ENCODE measurements at regions of chr6 and their contacts with region 1.

Region 1: DNA sequence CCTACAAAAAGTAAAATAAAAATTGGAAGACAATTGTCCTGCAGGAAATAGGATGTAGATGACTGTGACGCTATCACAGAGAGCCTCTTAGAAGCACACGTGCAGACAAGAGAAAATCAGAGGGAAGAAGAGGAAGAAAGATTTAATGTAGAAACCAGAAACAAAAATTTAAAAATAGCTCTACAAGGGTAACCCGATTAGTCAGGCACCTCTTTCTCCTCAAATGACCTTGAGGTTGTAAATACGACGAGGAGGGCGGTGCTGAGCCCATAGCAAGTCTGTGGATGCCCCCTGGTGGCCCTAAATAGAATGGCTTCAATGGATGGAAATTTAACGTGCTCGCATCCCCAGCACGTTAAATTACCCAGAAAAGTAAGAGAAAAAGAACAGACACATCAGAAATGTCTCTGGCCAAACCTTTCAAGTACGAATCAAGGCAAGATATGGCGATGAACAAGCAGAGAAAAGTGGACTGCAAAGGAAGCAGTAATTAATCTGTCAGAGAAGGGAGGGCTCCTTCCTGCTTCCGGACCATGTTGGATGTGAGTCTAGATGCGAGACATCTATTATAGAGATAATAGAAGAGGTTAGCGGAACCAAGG is 4.2 kb upstream of the PRPH2 start:
- DNase-seq: peak; percentile 53 to 96
- ATAC-seq: peak; percentile 97 to 98 (median 98)
- H3K4me3 ChIP-seq: peak overlapping the region; percentile 49
- H3K4me3 Mint-ChIP-seq: peak overlapping the region; percentile 93
- H3K27ac ChIP-seq: peak overlapping the region; percentile 72
- H3K27ac Mint-ChIP-seq: peak overlapping the region; percentile 90
- H3K4me1 ChIP-seq: peaks cover 8% of the 10 kb centered on the region
- H3K4me1 Mint-ChIP-seq: peaks cover 19 to 20% of the 10 kb centered on the region in 2 donors
- H3K27me3 ChIP-seq: no peaks in the 10 kb centered on the region
- H3K27me3 Mint-ChIP-seq: no peaks in the 10 kb centered on the region
- CTCF ChIP-seq: peak; percentile 86

Region 2: DNA sequence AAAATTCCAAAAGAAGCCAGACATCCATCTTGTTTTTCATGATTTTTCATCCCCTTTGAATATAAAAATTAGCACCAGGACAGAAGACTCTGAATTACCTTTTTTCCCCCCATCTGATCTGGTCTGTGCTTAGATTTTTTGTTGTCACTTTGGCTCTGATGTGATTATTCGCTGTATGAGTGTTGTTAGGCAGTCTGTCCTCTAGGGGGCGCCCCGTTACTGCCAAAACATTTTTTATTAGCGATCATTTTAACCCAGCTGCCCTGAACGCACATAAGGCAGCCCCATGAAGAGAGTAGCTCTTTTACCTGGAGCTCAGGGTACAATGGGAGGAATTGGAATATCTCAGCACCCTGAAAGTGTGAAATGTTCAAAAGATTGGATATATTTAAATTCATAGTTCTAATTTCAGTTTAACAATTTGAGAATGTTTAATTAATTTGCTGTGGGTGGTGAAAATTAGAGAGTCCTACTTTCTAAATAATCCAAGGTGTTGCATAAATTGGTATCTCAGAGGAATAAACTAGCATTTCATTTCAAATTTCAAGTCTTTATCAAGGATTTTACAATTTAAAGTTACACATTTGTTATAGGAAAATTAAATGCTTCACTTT is 64.9 kb before region 1 on chr6:
- intact Hi-C with region 1: loop called (anchors 1 kb)
- DNase-seq: peak; percentile 80 to 89
- ATAC-seq: peak; percentile 92 to 100 (median 96)
- H3K4me3 ChIP-seq: no peak overlapping the region
- H3K4me3 Mint-ChIP-seq: no peak overlapping the region
- H3K27ac ChIP-seq: no peak overlapping the region
- H3K27ac Mint-ChIP-seq: peak overlapping the region in 1 of 2 donors; percentile 17
- H3K4me1 ChIP-seq: no peaks in the 10 kb centered on the region
- H3K4me1 Mint-ChIP-seq: no peaks in the 10 kb centered on the region
- H3K27me3 ChIP-seq: no peaks in the 10 kb centered on the region
- H3K27me3 Mint-ChIP-seq: no peaks in the 10 kb centered on the region
- CTCF ChIP-seq: peak; percentile 91

Region 3: DNA sequence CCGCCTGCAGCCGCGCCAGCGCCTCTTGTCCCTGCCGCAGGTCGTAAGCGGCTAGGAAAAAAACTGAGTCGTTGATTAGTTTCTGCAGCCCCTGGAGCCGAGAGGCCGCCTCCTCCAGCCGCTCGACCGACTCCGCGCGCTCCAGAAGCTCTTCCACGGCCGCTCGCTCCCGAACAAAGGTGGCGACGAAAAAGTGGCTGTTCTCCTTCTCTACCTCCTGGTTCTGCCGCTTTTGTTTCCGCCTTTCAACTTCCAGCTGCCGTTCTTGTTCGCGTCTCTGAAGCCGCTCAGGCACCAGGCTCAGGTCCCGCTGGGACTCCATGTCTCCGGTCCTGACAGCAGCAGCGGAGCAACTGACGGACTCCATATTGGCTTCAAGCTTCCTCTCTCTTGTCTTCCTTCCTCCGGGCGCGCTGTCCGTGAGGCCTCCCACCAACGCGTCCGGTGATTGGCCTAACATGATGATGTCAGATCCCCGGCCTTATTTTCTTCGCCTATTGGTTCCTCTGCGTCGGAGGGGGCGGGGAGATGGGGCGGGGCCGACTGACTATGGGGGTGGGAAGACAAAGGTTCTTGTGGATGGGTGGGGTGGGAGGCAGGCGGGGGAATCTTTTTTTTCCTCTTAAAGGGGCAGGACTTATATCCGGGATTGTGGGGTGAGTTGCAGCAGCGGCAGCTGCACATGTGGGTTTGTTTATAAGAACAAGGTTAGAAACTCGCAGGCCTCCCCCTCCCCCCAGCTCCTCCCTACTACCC is 19.3 kb after region 1 on chr6 and contains the start of gene TBCC:
- intact Hi-C with region 1: loop called (anchors 1 kb)
- DNase-seq: peak; percentile 86 to 98
- ATAC-seq: peak; percentile 83 to 92 (median 85)
- H3K4me3 ChIP-seq: peak within 1 kb of the TSS; percentile 98
- H3K4me3 Mint-ChIP-seq: peak within 1 kb of the TSS; percentile 100
- H3K27ac ChIP-seq: peak within 1 kb of the TSS; percentile 95
- H3K27ac Mint-ChIP-seq: peak within 1 kb of the TSS; percentile 98 to 100
- H3K4me1 ChIP-seq: peaks cover 38% of the 10 kb centered on the region
- H3K4me1 Mint-ChIP-seq: peaks cover 22 to 23% of the 10 kb centered on the region in 2 donors
- H3K27me3 ChIP-seq: no peaks in the 10 kb centered on the region
- H3K27me3 Mint-ChIP-seq: no peaks in the 10 kb centered on the region
- CTCF ChIP-seq: no peak
- total RNA-seq, gene TBCC: 64.1 to 77.6 (median 65.6) TPM

Region 4: GRCh38 chr6:42782622-42783176 is 56.1 kb after region 1 on chr6:
- intact Hi-C with region 1: loop called (anchors 5 kb)
- DNase-seq: peak; percentile 64 to 89
- ATAC-seq: peak; percentile 51 to 69 (median 60)
- H3K4me3 ChIP-seq: peak overlapping the region; percentile 89
- H3K4me3 Mint-ChIP-seq: peak overlapping the region; percentile 95
- H3K27ac ChIP-seq: peak overlapping the region; percentile 100
- H3K27ac Mint-ChIP-seq: no peak overlapping the region
- H3K4me1 ChIP-seq: peaks cover 22% of the 10 kb centered on the region
- H3K4me1 Mint-ChIP-seq: peaks cover 6 to 14% of the 10 kb centered on the region in 2 donors
- H3K27me3 ChIP-seq: no peaks in the 10 kb centered on the region
- H3K27me3 Mint-ChIP-seq: no peaks in the 10 kb centered on the region
- CTCF ChIP-seq: no peak

Region 5: DNA sequence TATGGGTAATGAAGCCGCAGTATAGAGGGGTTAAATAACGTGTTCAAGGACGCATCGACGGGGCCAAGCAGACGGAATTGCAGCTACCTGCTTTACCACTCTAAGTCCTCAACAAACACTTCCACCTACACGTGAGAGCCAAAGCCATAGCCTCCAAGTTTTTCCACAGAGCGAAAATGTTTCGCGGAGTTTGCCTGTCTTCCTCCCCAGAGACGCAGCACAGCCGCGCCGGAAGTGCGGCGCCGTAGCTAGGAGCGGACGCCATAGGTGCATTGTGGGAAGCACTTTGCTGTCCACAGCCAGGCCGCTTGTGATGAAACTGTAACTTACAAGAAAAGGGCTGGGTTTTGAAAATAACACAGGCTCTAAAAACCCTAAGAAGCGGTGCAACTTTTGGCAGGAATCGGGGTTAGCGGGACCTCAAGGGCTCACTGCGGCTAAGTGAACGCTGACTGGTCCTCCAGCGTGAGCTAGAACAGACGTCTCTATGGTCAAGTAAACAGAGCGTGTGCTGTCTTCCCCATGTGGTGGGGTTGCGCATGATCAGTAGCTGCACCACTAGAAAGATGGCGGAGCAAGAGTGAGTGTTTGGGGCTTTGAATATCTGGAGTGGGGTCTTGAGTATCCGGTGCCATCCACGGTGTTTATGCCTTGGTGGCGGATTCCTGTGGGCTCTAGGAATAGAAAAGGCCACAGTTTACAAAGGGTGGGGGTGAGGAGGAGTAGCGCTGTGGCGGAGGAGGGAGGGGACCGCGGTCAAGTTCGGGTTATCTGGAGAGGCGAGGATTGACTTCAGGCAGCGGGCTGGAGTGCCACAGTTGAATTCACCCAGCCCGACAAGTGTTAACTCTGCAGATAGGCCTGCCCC is 153.0 kb after region 1 on chr6 and contains the start of gene RPL7L1:
- intact Hi-C with region 1: loop called (anchors 1 kb)
- DNase-seq: peak; percentile 78 to 92
- ATAC-seq: peak; percentile 91 to 97 (median 92)
- H3K4me3 ChIP-seq: peak within 1 kb of the TSS; percentile 63
- H3K4me3 Mint-ChIP-seq: peak within 1 kb of the TSS; percentile 98
- H3K27ac ChIP-seq: peak within 1 kb of the TSS; percentile 86
- H3K27ac Mint-ChIP-seq: peak within 1 kb of the TSS; percentile 99 to 100
- H3K4me1 ChIP-seq: peaks cover 19% of the 10 kb centered on the region
- H3K4me1 Mint-ChIP-seq: peaks cover 26 to 31% of the 10 kb centered on the region in 2 donors
- H3K27me3 ChIP-seq: no peaks in the 10 kb centered on the region
- H3K27me3 Mint-ChIP-seq: no peaks in the 10 kb centered on the region
- CTCF ChIP-seq: no peak
- total RNA-seq, gene RPL7L1: 66.9 to 67.2 (median 66.9) TPM

Region 6: GRCh38 chr6:42901536-42901957 is 175.0 kb after region 1 on chr6:
- intact Hi-C with region 1: loop called (anchors 1 kb)
- DNase-seq: peak; percentile 40 to 92
- ATAC-seq: peak; percentile 96 to 99 (median 99)
- H3K4me3 ChIP-seq: no peak overlapping the region
- H3K4me3 Mint-ChIP-seq: no peak overlapping the region
- H3K27ac ChIP-seq: no peak overlapping the region
- H3K27ac Mint-ChIP-seq: no peak overlapping the region
- H3K4me1 ChIP-seq: peaks cover 6% of the 10 kb centered on the region
- H3K4me1 Mint-ChIP-seq: peaks cover 8 to 12% of the 10 kb centered on the region in 2 donors
- H3K27me3 ChIP-seq: no peaks in the 10 kb centered on the region
- H3K27me3 Mint-ChIP-seq: no peaks in the 10 kb centered on the region
- CTCF ChIP-seq: peak; percentile 83